Activated CD4-positive, alpha-beta T cell treated with anti-CD3 and anti-CD28 coated beads, Interleukin-2, amount 10 ng/mL, durations not matched to agents 7 days and 5 days (primary cell): ENCODE measurements at regions of chr15 and their contacts with region 1.

Region 1: GRCh38 chr15:76150971-76151598 is 91.3 kb downstream of the TMEM266 start:
- DNase-seq: peak; percentile 77
- H3K4me3 Mint-ChIP-seq: no peak overlapping the region
- H3K27ac Mint-ChIP-seq: no peak overlapping the region
- H3K4me1 Mint-ChIP-seq: peaks cover 8% of the 10 kb centered on the region
- H3K27me3 Mint-ChIP-seq: peaks cover 12% of the 10 kb centered on the region

Region 2: DNA sequence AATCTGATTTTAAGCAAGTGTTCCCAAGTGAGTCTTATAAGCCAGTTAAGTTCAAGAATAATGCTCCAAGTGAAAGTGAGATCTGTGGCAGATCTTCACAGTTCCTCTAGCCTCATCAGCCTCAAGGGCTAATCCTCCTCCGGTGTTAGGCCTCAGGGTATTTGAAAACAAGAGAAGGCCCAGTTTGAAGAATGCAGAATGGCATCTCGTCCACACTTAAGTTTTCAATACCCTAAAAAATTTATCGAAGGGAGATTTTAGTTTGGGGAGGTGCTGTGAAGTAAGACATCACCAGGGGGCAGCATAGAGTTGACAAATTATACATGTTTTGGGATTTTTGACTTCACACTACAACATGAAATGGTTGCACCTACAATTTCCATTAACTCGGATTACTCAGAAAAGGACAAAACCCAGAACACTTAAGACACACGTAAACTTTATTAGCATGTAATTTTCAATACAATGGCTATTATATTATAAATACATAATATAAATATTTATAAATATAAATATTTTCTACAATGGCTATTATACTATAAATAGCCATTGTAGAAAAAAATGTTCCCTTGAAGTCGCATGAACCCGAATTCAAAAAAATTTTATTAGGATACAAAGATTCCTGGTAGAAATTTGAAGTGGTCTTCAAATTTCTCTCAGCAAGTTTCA is 93.6 kb before region 1 on chr15:
- CTCF ChIA-PET with region 1: interaction called, 15 read pairs
- POLR2A ChIA-PET with region 1: interaction called, 3 read pairs
- DNase-seq: peak; percentile 59
- H3K4me3 Mint-ChIP-seq: no peak overlapping the region
- H3K27ac Mint-ChIP-seq: no peak overlapping the region
- H3K4me1 Mint-ChIP-seq: peaks cover 19% of the 10 kb centered on the region
- H3K27me3 Mint-ChIP-seq: peaks cover 62% of the 10 kb centered on the region

Region 3: DNA sequence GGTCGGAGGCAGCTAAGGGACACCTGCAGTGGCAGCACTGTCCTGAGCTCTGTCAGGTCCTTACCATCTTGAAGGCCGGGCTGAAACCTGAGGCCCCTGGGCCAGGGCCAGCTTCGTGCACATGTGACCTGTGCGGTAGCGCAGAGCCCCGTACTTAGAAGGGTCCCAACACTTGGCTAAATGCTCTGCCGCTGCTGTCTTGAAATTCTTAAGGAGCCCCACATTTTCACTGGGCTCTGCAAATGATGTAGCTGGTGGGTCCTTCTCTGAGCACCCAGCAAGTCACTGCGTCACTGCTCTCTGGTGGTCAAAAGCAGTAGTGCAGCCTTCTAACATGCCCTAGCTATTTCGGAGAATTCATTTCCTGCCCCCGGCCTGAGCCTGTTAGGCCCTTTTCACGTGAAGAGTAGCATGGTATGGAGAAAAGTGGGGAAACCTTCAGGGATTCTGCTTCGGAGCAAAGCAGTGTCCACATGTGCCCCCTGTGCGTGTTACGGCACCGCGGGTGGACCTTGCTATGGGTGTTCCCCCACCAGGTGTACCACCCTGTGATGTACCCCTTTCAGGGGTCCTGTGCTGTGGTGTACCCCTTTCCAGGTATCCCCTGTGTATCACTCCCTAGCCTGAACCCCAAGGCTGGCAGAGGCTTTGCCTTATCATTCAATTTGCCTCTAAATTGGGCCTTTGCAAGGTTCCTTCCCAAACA is 11.6 kb before region 1 on chr15:
- CTCF ChIA-PET with region 1: interaction called, 15 read pairs
- POLR2A ChIA-PET with region 1: no interaction called
- DNase-seq: peak; percentile 84
- H3K4me3 Mint-ChIP-seq: no peak overlapping the region
- H3K27ac Mint-ChIP-seq: no peak overlapping the region
- H3K4me1 Mint-ChIP-seq: peaks cover 9% of the 10 kb centered on the region
- H3K27me3 Mint-ChIP-seq: peaks cover 29% of the 10 kb centered on the region

Region 4: DNA sequence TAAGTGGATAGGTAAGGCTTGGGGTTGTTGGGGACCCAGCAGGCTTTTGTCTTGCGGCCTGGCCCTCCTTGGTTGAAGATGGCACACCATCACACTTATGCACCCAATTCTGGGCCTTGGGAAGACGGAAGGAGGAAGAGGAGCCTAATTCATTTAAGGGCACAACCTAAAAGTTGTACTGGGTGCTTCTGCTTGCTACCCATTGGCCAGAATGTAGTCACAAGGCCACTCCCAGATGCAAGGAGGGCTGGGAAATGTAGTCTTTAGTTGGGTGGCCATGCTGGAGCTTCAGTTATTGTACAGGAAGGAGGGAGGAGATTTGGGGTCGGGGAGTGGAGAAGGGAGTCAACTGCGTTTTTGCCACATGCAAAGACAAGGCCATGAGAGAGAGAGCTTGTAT is 17.9 kb after region 1 on chr15:
- CTCF ChIA-PET with region 1: no interaction called
- POLR2A ChIA-PET with region 1: no interaction called
- DNase-seq: no peak
- H3K4me3 Mint-ChIP-seq: no peak overlapping the region
- H3K27ac Mint-ChIP-seq: no peak overlapping the region
- H3K4me1 Mint-ChIP-seq: no peaks in the 10 kb centered on the region
- H3K27me3 Mint-ChIP-seq: no peaks in the 10 kb centered on the region